MCF 10A (cell line): ENCODE measurements at regions of chr18 and their contacts with region 1.

Region 1: DNA sequence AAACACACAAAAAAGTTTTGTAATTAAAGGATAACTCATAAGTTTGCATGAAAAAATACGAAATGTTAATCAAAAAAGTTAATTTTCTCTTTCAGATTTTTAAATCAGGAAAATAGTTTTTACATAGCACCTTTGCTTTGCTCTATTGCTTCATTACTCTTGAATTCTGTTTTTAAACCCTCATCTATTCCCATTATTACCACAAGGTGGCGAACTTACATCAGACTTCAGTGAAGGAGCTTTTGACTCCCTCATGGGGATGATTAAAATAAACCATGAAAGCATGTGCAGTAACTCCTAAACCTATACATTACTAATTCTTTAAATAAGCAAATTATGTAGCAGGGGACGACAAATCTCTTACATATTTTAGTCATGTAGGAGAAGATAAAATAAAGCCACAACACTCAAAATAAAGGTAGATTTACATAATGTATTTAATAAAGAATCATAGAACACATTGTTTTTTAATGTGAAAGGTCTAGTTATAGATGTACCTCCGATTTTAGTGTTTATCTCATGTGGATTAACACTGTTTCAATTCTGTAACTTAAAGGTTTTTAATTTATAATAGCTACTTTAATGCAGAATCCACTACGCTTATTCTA is 105.2 kb downstream of the NETO1 start:
- DNase-seq: peak; percentile 81
- H3K4me3 Mint-ChIP-seq: no peak overlapping the region
- H3K27ac Mint-ChIP-seq: no peak overlapping the region
- H3K4me1 Mint-ChIP-seq: no peaks in the 10 kb centered on the region
- H3K27me3 Mint-ChIP-seq: no peaks in the 10 kb centered on the region
- CTCF ChIP-seq: peak; percentile 71

Region 2: GRCh38 chr18:72700961-72701718 is 61.5 kb before region 1 on chr18:
- CTCF ChIA-PET with region 1: no interaction called
- POLR2A ChIA-PET with region 1: no interaction called
- intact Hi-C with region 1: loop called (anchors 1 kb)
- DNase-seq: peak; percentile 40
- H3K4me3 Mint-ChIP-seq: no peak overlapping the region
- H3K27ac Mint-ChIP-seq: no peak overlapping the region
- H3K4me1 Mint-ChIP-seq: no peaks in the 10 kb centered on the region
- H3K27me3 Mint-ChIP-seq: no peaks in the 10 kb centered on the region
- CTCF ChIP-seq: peak; percentile 61

Region 3: DNA sequence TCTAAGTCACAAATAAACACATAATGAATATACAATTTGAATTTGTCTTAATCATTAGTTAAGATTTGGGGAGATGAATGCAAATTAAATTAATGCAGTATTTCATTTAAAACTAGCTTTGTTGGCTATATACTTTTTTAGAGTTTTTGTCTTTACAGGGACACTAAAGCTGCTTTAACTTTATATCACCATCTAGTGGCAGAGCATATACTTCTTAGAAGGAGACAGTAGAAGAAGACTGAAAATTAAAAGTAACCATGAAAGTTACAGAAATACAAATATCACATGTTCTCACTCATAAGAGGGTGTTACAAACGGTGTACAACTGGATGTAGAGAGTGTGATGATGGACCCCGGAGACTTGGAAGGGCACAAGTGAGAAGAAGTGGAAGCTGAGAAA is 373.5 kb after region 1 on chr18:
- CTCF ChIA-PET with region 1: interaction called, 53 read pairs
- POLR2A ChIA-PET with region 1: interaction called, 3 read pairs
- intact Hi-C with region 1: loop called (anchors 1 kb)
- DNase-seq: peak; percentile 29
- H3K4me3 Mint-ChIP-seq: no peak overlapping the region
- H3K27ac Mint-ChIP-seq: no peak overlapping the region
- H3K4me1 Mint-ChIP-seq: peaks cover 5% of the 10 kb centered on the region
- H3K27me3 Mint-ChIP-seq: no peaks in the 10 kb centered on the region
- CTCF ChIP-seq: peak; percentile 53

Region 4: DNA sequence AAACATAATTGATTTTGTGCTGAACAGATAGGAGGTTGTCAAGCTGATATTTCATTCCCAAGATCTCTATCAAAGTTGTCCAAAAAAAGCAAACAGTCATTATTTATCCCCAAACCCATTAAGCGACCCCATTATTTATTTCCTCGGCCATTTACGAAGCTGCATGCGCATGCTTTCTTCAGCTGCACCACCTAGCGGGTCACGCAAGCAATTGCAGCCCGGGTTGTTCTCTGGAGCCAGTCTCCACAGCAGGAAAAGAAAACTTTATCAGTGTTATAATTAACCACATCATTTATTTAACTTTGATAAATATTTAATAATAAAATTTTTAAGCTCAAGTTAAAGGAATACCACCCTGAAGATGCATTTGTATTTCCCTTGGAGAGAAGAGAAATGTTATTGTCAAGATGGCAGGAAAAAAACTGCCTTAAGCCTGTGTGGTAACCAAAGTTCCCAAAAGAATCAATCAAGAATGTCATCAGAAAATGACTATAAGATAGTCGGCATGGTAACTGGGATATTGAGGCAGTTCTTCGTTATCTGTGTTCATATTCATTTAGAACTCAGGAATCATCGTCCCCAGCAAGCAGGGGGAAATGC is 1080.3 kb after region 1 on chr18:
- CTCF ChIA-PET with region 1: interaction called, 17 read pairs
- POLR2A ChIA-PET with region 1: no interaction called
- intact Hi-C with region 1: loop called (anchors 1 kb)
- DNase-seq: peak; percentile 55
- H3K4me3 Mint-ChIP-seq: no peak overlapping the region
- H3K27ac Mint-ChIP-seq: peak overlapping the region; percentile 8
- H3K4me1 Mint-ChIP-seq: peaks cover 5% of the 10 kb centered on the region
- H3K27me3 Mint-ChIP-seq: no peaks in the 10 kb centered on the region
- CTCF ChIP-seq: peak; percentile 89

Region 5: GRCh38 chr18:73980289-73980979 is 1217.8 kb after region 1 on chr18:
- CTCF ChIA-PET with region 1: interaction called, 3 read pairs
- POLR2A ChIA-PET with region 1: no interaction called
- intact Hi-C with region 1: loop called (anchors 2 kb)
- DNase-seq: peak; percentile 72
- H3K4me3 Mint-ChIP-seq: no peak overlapping the region
- H3K27ac Mint-ChIP-seq: peak overlapping the region; percentile 24
- H3K4me1 Mint-ChIP-seq: peaks cover 22% of the 10 kb centered on the region
- H3K27me3 Mint-ChIP-seq: no peaks in the 10 kb centered on the region
- CTCF ChIP-seq: peak; percentile 62

Region 6: DNA sequence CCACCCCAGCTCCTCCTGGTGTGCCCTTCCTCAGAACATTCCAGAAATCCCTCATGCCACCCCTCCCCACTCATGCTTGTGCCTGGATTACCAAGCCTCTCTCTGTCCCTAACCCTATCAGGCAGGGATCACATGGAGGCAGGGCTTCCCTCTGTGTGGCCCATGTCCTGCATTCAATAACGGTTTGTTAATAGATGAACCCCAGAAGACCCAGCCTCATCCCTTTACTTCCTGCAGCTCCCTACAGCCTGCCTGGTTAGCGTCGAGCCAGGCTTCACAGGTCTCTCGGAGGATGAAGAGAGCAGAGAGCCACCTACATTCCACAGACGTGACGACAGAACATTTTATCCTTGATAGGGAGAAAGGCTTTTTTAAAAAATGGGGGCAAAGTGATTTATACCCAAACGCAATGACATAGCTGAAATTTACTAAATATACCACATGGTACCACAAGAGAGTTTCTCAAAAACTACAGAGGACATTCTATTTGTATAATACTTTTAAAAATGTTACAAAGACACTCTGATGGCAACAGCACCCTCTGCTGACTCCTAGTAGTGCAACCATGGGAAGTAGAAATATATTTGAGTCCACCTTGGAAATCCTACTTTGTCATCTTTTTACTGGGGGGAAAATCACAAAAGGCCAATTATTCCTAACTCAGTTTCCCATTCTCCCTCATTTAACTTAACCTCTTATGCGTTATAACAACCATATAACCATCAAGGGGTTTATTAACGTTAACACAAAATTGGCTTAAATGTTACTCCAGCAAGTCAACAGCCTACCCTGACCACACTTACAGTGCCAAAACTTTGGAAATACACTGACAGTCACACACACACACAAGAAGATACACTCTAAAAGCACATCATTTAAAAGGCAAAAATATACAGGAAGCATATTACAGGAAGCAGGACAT is 1354.3 kb after region 1 on chr18:
- CTCF ChIA-PET with region 1: interaction called, 13 read pairs
- POLR2A ChIA-PET with region 1: no interaction called
- intact Hi-C with region 1: loop called (anchors 1 kb)
- DNase-seq: peak; percentile 57
- H3K4me3 Mint-ChIP-seq: no peak overlapping the region
- H3K27ac Mint-ChIP-seq: peak overlapping the region; percentile 20
- H3K4me1 Mint-ChIP-seq: no peaks in the 10 kb centered on the region
- H3K27me3 Mint-ChIP-seq: peaks cover 15% of the 10 kb centered on the region
- CTCF ChIP-seq: peak; percentile 58

Region 7: DNA sequence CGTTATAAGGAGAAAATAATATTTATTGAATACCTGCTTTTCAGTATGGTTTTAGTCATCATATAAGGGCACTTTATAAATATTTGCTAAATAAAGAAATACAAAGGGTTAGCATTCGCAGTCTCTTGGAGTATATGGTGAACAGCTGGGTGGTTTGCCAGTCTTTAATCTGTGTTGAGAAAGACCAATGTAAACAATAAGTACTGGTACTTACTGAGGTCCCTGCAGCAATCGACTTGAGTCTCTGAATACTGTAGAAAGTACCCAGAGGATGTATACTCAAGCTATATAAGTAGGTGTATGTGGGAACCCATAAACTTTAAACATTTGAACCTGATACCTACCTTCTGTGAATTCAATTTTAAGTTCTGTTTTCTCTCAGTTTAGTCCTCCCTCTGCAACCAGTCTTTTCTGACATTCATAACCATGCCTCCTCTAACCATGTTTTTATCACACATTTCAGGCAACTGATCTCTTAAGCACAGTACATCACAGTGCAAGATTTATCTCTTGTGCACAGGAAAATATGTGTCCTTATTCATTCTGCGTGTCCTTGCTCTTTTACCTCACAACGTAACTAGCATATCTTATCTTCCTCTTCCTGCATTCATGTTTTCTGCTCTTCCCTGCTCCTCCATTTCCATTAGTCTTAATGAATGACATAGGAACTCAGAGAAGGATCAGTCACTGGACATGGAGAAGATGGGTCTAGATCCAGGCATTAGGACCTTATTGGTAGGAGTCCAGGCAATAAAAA is 1574.7 kb after region 1 on chr18:
- CTCF ChIA-PET with region 1: no interaction called
- POLR2A ChIA-PET with region 1: no interaction called
- intact Hi-C with region 1: loop called (anchors 5 kb)
- DNase-seq: no peak
- H3K4me3 Mint-ChIP-seq: no peak overlapping the region
- H3K27ac Mint-ChIP-seq: no peak overlapping the region
- H3K4me1 Mint-ChIP-seq: no peaks in the 10 kb centered on the region
- H3K27me3 Mint-ChIP-seq: peaks cover 20% of the 10 kb centered on the region
- CTCF ChIP-seq: no peak